Activated CD4-positive, alpha-beta memory T cell treated with anti-CD3 and anti-CD28 coated beads, Interleukin-2, amount 10 ng/mL, durations not matched to agents 7 days and 5 days (primary cell): ENCODE measurements at regions of chr7 and their contacts with region 1.

Region 1: DNA sequence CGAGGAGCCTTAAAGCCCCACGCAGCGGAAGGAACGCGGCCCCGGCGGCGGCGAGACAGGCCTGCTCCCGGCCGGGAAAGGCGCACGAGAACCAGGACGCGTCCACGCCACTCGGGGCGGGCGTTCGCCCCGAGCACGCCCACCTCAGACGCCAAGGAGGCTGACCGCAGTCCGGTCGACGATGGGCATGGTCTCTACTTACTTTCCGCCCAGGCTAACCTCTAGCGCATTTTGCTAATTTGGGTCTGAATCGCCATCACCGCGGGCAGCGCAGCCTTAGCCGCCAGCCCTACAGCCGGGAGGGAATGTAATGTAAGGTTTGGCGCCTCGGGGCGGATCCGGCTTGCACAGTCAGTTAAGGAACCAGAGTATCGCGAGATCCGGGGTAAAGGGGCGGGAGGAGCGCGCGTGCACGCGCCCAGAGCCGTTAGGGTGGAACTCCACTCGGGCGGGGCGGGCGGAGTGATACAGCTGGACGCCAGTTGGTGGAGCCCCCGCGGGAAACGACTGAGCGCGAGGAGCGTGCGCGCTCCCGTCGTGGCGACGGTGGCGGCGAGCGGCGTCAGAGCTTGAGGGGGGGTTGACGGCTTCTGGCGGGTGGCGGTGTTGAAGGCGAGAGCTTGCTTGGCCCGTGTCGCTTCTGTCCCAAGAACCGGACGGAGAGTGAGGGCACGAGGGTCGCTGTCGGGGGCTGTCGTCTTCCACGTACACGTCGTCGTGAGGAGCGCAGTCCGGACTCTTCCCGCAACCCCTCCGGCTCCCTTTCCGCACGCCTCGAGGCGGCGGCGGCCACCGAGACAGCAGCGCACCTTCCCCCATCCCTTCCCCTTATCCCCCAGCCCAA is at the start of gene LUC7L2:
- DNase-seq: peak; percentile 100
- H3K4me3 Mint-ChIP-seq: peak within 1 kb of the TSS; percentile 96
- H3K27ac Mint-ChIP-seq: peak within 1 kb of the TSS; percentile 100
- H3K4me1 Mint-ChIP-seq: peaks cover 45% of the 10 kb centered on the region
- H3K27me3 Mint-ChIP-seq: no peaks in the 10 kb centered on the region
- total RNA-seq, gene LUC7L2: 106 to 110 TPM

Region 2: DNA sequence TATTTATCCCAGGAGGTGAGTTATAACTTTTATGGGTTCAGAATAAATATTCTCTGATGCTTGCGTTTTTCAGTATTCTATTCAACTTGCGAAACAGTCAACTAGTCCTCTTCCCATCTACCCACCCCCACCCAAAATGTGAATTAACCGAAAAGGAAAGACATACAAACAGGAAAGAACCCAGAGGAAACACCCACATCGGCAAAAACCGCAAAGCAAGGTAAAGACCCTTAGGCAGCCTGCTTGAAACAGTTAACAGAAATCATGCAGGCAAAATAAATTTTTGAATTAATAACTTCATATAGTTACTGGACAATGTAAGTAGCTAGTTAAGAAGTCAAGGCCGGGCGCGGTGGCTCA is 255.5 kb before region 1 on chr7:
- CTCF ChIA-PET with region 1: no interaction called
- POLR2A ChIA-PET with region 1: interaction called, 29 read pairs
- DNase-seq: peak; percentile 54
- H3K4me3 Mint-ChIP-seq: peak overlapping the region; percentile 92
- H3K27ac Mint-ChIP-seq: peak overlapping the region; percentile 90
- H3K4me1 Mint-ChIP-seq: peaks cover 24% of the 10 kb centered on the region
- H3K27me3 Mint-ChIP-seq: no peaks in the 10 kb centered on the region

Region 3: GRCh38 chr7:139109188-139109982 is 250.2 kb before region 1 on chr7 and contains the start of gene ZC3HAV1:
- CTCF ChIA-PET with region 1: no interaction called
- POLR2A ChIA-PET with region 1: interaction called, 29 read pairs
- DNase-seq: peak; percentile 92
- H3K4me3 Mint-ChIP-seq: peak within 1 kb of the TSS; percentile 92
- H3K27ac Mint-ChIP-seq: peak within 1 kb of the TSS; percentile 95
- H3K4me1 Mint-ChIP-seq: peaks cover 32% of the 10 kb centered on the region
- H3K27me3 Mint-ChIP-seq: no peaks in the 10 kb centered on the region
- total RNA-seq, gene ZC3HAV1: 129 to 133 TPM

Region 4: DNA sequence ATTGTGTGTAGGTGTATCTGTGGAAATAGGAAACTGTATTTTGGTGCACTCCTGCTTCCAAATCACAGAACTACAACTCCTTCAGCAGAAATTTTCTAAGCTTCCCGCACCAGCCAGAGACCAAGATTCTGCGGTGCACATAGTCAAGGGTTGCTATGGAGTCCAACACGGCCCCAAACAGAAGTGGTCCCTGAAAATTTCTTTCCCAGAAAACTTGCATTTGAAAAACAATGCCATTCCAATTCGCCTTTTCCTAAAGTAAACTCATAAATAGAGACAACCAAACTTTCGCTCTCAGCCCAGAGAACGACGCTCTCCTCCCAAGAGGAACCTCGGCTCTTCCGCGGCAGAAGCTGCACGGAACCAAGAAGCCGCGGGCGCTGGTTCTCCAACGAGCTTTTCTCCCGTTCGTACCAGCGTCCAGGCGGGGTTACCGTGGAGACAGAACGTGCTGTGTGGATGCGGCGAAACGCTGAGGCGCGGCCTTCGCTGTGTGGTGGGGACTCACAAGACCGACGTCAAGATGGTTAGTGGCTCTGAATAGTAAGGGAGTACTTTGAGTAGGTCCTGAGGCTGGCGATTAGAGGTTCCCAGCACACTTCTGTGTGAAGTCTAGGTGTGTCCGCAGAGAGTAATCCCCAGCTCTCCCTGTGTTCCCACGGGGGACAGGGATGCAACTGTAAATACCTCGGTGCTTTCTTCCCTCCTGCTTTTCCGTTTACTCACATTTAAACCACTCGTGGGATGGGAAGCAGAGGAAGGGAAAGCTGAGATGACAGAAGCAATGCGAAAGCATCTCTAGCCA is 226.1 kb before region 1 on chr7:
- CTCF ChIA-PET with region 1: no interaction called
- POLR2A ChIA-PET with region 1: interaction called, 12 read pairs
- DNase-seq: peak; percentile 90
- H3K4me3 Mint-ChIP-seq: peak overlapping the region; percentile 80
- H3K27ac Mint-ChIP-seq: peak overlapping the region; percentile 36
- H3K4me1 Mint-ChIP-seq: peaks cover 32% of the 10 kb centered on the region
- H3K27me3 Mint-ChIP-seq: peaks cover 4% of the 10 kb centered on the region

Region 5: DNA sequence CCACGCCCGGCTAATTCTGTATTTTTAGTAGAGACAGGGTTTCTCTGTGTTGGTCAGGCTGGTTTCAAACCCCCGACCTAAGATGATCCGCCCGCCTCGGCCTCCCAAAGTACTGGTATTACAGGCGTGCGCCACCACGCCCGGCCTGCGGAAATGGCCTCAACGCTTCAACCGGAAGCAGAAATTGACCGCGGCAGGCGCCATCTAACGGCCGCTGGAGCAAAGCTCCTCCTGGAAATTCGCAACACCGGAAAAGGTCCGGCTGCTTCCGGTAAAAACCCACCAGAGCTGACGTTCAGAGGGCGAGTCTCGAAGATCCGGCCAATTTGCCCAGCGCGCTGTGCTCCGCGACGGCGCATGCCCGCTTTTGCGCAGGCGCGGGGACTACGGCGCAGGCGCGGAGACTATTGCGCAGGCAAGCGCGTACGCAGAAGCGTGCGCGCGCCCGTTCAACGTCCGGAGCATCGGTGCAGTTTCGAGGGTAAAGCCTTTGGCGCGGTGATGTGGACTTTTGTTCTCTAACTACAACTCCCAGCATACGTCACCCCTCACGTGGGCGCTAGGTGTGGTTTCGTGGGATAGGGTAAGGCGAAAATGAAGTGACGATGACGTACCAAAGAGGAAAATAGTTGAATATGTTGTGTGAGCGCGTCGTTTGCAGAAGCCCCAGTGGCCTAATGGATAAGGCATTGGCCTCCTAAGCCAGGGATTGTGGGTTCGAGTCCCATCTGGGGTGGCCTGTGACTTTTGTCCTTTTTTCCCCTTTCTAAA is 19.4 kb before region 1 on chr7:
- CTCF ChIA-PET with region 1: interaction called, 11 read pairs
- POLR2A ChIA-PET with region 1: interaction called, 57 read pairs
- DNase-seq: peak; percentile 99
- H3K4me3 Mint-ChIP-seq: peak overlapping the region; percentile 83
- H3K27ac Mint-ChIP-seq: peak overlapping the region; percentile 96
- H3K4me1 Mint-ChIP-seq: peaks cover 27% of the 10 kb centered on the region
- H3K27me3 Mint-ChIP-seq: peaks cover 2% of the 10 kb centered on the region

Region 6: GRCh38 chr7:139370301-139370942 is 10.8 kb after region 1 on chr7:
- CTCF ChIA-PET with region 1: interaction called, 5 read pairs
- POLR2A ChIA-PET with region 1: interaction called, 36 read pairs
- DNase-seq: no peak
- H3K4me3 Mint-ChIP-seq: no peak overlapping the region
- H3K27ac Mint-ChIP-seq: no peak overlapping the region
- H3K4me1 Mint-ChIP-seq: peaks cover 54% of the 10 kb centered on the region
- H3K27me3 Mint-ChIP-seq: no peaks in the 10 kb centered on the region

Region 7: GRCh38 chr7:139393621-139394211 is 34.1 kb after region 1 on chr7:
- CTCF ChIA-PET with region 1: no interaction called
- POLR2A ChIA-PET with region 1: interaction called, 27 read pairs
- DNase-seq: no peak
- H3K4me3 Mint-ChIP-seq: no peak overlapping the region
- H3K27ac Mint-ChIP-seq: peak overlapping the region; percentile 74
- H3K4me1 Mint-ChIP-seq: peaks cover 38% of the 10 kb centered on the region
- H3K27me3 Mint-ChIP-seq: no peaks in the 10 kb centered on the region